ENCODE measurements at regions of chr6 and their contacts with region 1.

Region 1: GRCh38 chr6:51866001-51866400 is 221.4 kb downstream of the PKHD1 start:
- DNase-seq: no peak
- ATAC-seq: no peak
- H3K4me3 Mint-ChIP-seq: no peak overlapping the region
- H3K27ac Mint-ChIP-seq: no peak overlapping the region
- H3K4me1 Mint-ChIP-seq: no peaks in the 10 kb centered on the region
- H3K27me3 Mint-ChIP-seq: peaks cover 3% of the 10 kb centered on the region

Region 2: GRCh38 chr6:51626391-51626790 is 239.6 kb before region 1 on chr6:
- CTCF ChIA-PET with region 1: no interaction called
- POLR2A ChIA-PET with region 1: no interaction called
- DNase-seq: no peak
- ATAC-seq: no peak
- H3K4me3 Mint-ChIP-seq: no peak overlapping the region
- H3K27ac Mint-ChIP-seq: no peak overlapping the region
- H3K4me1 Mint-ChIP-seq: no peaks in the 10 kb centered on the region
- H3K27me3 Mint-ChIP-seq: no peaks in the 10 kb centered on the region

Region 3: DNA sequence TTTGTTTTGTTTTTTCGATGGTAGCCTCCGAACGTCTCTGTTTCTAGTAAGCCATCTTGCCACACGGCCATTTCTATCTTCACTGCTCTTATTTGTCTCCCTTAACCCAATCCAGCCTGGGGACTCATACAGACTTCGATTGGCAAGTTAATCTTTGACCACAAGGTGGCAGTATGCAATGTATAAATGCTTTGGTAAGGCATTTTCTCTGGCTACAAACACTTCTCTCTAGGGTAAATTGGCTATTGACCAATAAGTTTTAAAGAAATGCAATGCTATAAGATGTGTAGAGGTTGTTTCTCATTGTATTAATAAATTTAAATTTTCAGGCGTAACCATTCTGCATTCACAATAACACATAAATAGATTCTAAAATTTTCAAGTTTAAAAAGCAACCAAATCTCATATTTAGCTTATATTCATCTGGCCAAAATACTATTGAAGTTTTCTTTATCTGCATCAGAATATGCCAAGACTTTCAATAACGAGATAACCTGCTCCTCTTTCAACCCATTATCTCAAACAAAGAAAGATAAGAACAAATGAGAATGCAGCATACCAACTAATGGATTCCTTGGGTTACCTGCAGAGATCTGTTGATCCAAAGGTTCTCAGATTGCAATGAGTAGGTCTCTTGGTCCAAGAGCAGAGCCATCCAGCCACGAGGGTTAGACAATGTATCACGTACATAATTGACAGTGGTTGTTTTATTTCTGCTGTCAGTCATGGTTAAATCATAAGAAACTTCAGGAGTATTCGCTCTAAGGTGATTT is 10.5 kb before region 1 on chr6:
- CTCF ChIA-PET with region 1: interaction called, 12 read pairs
- POLR2A ChIA-PET with region 1: no interaction called
- DNase-seq: peak; percentile 41
- ATAC-seq: no peak
- H3K4me3 Mint-ChIP-seq: no peak overlapping the region
- H3K27ac Mint-ChIP-seq: no peak overlapping the region
- H3K4me1 Mint-ChIP-seq: no peaks in the 10 kb centered on the region
- H3K27me3 Mint-ChIP-seq: no peaks in the 10 kb centered on the region

Region 4: GRCh38 chr6:51885957-51886356 is 20.0 kb after region 1 on chr6:
- CTCF ChIA-PET with region 1: no interaction called
- POLR2A ChIA-PET with region 1: no interaction called
- DNase-seq: no peak
- ATAC-seq: no peak
- H3K4me3 Mint-ChIP-seq: no peak overlapping the region
- H3K27ac Mint-ChIP-seq: no peak overlapping the region
- H3K4me1 Mint-ChIP-seq: no peaks in the 10 kb centered on the region
- H3K27me3 Mint-ChIP-seq: no peaks in the 10 kb centered on the region

Measured in activated CD8-positive, alpha-beta T cell treated with anti-CD3 and anti-CD28 coated beads, Interleukin-2, amount 10 ng/mL, durations not matched to agents 7 days and 5 days (primary cell).